Activated CD4-positive, alpha-beta T cell treated with anti-CD3 and anti-CD28 coated beads for 36 hours (primary cell): ENCODE measurements at regions of chr19 and their contacts with region 1.

Region 1: GRCh38 chr19:12092065-12092867 is 27.7 kb downstream of the ZNF844 start:
- DNase-seq: peak; percentile 90
- ATAC-seq: peak; percentile 92
- H3K4me3 Mint-ChIP-seq: peak overlapping the region; percentile 80
- H3K27ac Mint-ChIP-seq: peak overlapping the region; percentile 69
- H3K4me1 Mint-ChIP-seq: peaks cover 10% of the 10 kb centered on the region
- H3K27me3 Mint-ChIP-seq: peaks cover 6% of the 10 kb centered on the region

Region 2: DNA sequence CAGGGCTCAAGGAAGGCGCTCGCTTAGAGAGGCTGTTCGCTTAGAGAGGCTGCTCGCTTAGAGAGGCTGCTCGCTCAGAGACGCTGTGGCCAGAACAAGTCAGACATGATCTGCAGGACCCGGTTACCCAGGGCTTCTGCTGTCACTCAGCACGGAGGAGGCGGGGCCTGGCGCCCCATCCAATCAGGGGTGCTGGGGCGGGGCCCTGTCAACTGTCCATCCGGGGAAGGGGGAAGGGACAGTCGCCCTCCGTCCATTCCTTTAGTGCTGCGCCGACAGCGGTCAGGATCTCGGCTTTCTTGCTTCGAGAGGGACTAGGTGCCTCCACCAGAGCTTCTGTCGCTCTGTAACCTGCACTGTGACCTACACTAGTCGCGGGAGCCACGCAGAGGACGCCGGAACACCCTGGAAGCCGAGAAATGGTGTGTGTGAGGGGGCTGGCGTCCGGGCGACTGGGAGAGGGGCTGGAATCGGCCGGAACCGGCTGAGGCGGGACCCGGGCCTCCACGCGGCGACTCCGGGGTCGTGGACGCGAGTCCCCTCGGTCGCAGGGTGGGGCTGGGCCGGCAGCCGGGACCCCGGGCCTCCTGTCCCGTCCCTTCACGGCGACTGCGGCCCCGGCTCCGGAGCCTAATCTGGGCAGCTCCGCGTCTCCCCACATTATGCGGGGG is 278.1 kb before region 1 on chr19 and contains the start of gene ZNF440:
- CTCF ChIA-PET with region 1: no interaction called
- POLR2A ChIA-PET with region 1: no interaction called
- intact Hi-C with region 1: no loop called
- DNase-seq: peak; percentile 95
- ATAC-seq: peak; percentile 100
- H3K4me3 Mint-ChIP-seq: peak within 1 kb of the TSS; percentile 89
- H3K27ac Mint-ChIP-seq: peak within 1 kb of the TSS; percentile 73
- H3K4me1 Mint-ChIP-seq: peaks cover 20% of the 10 kb centered on the region
- H3K27me3 Mint-ChIP-seq: no peaks in the 10 kb centered on the region
- total RNA-seq, gene ZNF440: 7.0 to 7.7 TPM

Region 3: GRCh38 chr19:11868188-11868587 is 224.1 kb before region 1 on chr19:
- CTCF ChIA-PET with region 1: no interaction called
- POLR2A ChIA-PET with region 1: no interaction called
- intact Hi-C with region 1: no loop called
- DNase-seq: no peak
- ATAC-seq: no peak
- H3K4me3 Mint-ChIP-seq: no peak overlapping the region
- H3K27ac Mint-ChIP-seq: no peak overlapping the region
- H3K4me1 Mint-ChIP-seq: no peaks in the 10 kb centered on the region
- H3K27me3 Mint-ChIP-seq: no peaks in the 10 kb centered on the region

Region 4: DNA sequence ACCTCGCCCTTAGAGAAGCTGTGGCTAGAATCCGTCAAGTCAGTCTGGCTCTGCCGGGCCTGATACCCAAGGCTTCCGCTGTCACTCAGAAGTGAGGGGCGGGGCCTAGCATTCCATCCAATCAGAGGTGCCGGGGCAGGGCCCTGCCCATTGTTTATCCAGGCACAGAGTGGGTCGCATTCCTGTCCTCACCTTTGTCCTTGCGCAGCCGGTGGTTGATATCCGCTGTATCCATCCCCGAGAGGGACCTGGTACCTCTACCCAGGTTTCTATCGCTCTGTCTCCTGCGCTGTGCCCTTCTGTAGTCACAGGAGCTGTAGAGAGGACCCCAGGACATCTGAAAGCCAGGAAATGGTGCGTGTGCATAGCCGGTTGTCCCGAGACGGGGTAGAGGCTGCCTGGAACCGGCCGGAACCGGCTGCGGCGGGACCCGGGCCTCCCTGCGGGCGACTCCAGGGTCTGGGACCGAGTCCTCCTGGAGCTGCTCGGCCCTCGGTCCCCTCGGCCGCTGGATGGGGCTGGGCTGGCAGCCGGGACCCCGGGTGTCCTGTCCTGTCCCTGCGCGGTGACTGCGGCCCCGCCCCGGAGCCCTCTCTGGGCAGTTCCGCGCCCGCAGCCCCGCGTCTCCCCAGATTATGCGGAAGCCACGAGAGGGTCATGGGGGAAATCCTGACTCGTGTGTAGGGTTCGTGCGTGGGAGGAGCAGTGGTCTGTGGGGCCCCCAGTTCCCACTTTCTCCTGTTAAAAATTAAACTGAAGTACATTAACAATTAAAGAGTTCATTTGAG is 127.2 kb before region 1 on chr19 and contains the start of gene ZNF763:
- CTCF ChIA-PET with region 1: interaction called, 7 read pairs
- POLR2A ChIA-PET with region 1: no interaction called
- intact Hi-C with region 1: loop called in 1 of 2 experiments (anchors 1 kb)
- DNase-seq: peak; percentile 94
- ATAC-seq: peak; percentile 98
- H3K4me3 Mint-ChIP-seq: peak within 1 kb of the TSS; percentile 84
- H3K27ac Mint-ChIP-seq: peak within 1 kb of the TSS; percentile 73
- H3K4me1 Mint-ChIP-seq: peaks cover 20% of the 10 kb centered on the region
- H3K27me3 Mint-ChIP-seq: no peaks in the 10 kb centered on the region
- total RNA-seq, gene ZNF763: 1.1 to 1.2 TPM

Region 5: DNA sequence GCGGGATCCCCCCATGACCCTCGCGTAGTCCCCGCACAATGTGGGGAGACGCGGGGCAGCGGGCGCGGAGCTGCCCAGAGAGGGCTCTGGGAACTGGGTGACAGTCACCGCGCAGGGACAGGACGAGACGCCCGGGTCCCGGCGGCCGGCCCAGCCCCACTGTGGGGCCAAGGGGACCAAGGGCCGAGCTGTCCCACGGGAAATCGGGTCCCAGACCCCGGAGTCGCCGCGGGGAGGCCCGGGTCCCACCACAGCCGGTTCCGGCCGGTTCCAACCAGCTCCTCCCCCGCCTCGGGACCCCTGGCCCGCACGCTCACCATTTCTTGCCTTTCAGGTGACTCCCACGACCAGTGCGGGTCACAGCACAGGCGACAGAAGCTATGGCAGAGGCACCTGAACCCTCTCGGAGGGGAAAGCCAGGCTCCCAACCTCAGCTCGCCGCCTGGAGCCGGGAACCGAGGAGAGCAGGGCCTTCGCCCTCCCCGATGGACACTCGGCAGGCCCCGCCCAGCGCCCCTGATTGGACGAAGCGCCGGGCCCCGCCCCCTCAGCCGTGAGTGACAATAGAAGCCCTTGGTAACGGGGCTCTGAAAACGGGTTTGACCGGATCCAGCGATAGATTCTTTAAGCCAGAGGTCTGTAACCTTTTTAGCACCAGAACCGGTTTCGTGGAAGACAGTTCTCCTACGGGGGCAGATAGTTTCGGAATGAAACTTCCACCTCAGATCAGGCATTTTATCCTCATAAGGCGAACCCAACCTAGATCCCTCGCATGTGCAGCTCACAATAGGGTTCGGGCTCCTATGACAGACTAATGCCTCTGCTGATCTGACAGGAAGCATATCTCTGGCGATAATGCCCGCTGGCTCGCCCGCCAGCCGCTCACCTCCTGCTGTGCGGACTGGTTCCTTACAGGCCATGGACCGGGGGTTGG is 56.8 kb before region 1 on chr19 and contains the start of gene ZNF433:
- CTCF ChIA-PET with region 1: no interaction called
- POLR2A ChIA-PET with region 1: no interaction called
- intact Hi-C with region 1: no loop called
- DNase-seq: peak; percentile 89
- ATAC-seq: peak; percentile 97
- H3K4me3 Mint-ChIP-seq: peak within 1 kb of the TSS; percentile 77
- H3K27ac Mint-ChIP-seq: peak within 1 kb of the TSS; percentile 82
- H3K4me1 Mint-ChIP-seq: peaks cover 9% of the 10 kb centered on the region
- H3K27me3 Mint-ChIP-seq: peaks cover 3% of the 10 kb centered on the region
- total RNA-seq, gene ZNF433: 1.2 to 1.5 TPM

Region 6: GRCh38 chr19:12064590-12065538 is 27.4 kb before region 1 on chr19 and contains the start of gene ZNF844:
- CTCF ChIA-PET with region 1: interaction called, 35 read pairs
- POLR2A ChIA-PET with region 1: no interaction called
- intact Hi-C with region 1: no loop called
- DNase-seq: peak; percentile 91
- ATAC-seq: peak; percentile 94
- H3K4me3 Mint-ChIP-seq: peak within 1 kb of the TSS; percentile 79
- H3K27ac Mint-ChIP-seq: peak within 1 kb of the TSS; percentile 86
- H3K4me1 Mint-ChIP-seq: peaks cover 5% of the 10 kb centered on the region
- H3K27me3 Mint-ChIP-seq: no peaks in the 10 kb centered on the region
- total RNA-seq, gene ZNF844: 4.4 to 5.5 TPM